ENCODE measurements at regions of chr18 and their contacts with region 1.

Region 1: GRCh38 chr18:77132371-77133050 is at the start of gene MBP:
- DNase-seq: peak; percentile 76
- ATAC-seq: peak; percentile 66
- H3K4me3 Mint-ChIP-seq: peak within 1 kb of the TSS; percentile 97
- H3K27ac Mint-ChIP-seq: peak within 1 kb of the TSS; percentile 94
- H3K4me1 Mint-ChIP-seq: peaks cover 62% of the 10 kb centered on the region
- H3K27me3 Mint-ChIP-seq: no peaks in the 10 kb centered on the region
- total RNA-seq, gene MBP: 86.5 to 87.0 TPM

Region 2: DNA sequence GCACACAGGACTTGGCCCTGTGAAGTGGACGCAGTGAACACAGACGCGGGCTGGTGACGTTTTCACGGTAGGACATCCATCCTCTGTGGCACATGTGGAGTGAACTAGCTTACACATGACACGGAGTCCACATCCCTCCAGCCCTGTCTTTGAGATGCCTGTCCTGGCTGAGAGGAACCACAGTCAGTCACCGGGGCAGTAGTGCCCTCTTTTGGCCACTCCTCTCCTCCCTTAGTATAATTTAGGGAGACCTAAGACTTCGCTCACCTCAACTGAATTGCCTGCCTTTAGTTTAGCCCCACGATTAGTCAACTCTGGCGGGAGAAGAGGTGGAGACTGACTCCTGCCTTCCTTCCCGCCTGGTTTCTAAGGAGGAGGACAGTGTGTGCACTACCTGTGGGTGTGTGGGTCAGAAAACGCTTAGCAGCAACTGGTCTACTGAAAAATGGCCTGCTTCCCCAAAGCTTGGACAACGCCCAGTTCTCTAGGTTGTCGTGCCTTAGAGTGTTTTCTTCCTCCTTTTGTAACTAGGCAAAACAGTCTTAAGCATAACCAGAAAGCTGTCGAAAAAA is 70.5 kb before region 1 on chr18:
- CTCF ChIA-PET with region 1: interaction called, 26 read pairs
- POLR2A ChIA-PET with region 1: interaction called, 101 read pairs
- DNase-seq: peak; percentile 58
- ATAC-seq: peak; percentile 45
- H3K4me3 Mint-ChIP-seq: peak overlapping the region; percentile 72
- H3K27ac Mint-ChIP-seq: peak overlapping the region; percentile 99
- H3K4me1 Mint-ChIP-seq: peaks cover 88% of the 10 kb centered on the region
- H3K27me3 Mint-ChIP-seq: no peaks in the 10 kb centered on the region

Region 3: GRCh38 chr18:77101410-77102258 is 30.9 kb before region 1 on chr18:
- CTCF ChIA-PET with region 1: interaction called, 8 read pairs
- POLR2A ChIA-PET with region 1: interaction called, 58 read pairs
- DNase-seq: peak; percentile 48
- ATAC-seq: peak; percentile 56
- H3K4me3 Mint-ChIP-seq: peak overlapping the region; percentile 71
- H3K27ac Mint-ChIP-seq: peak overlapping the region; percentile 96
- H3K4me1 Mint-ChIP-seq: peaks cover 93% of the 10 kb centered on the region
- H3K27me3 Mint-ChIP-seq: no peaks in the 10 kb centered on the region

Region 4: DNA sequence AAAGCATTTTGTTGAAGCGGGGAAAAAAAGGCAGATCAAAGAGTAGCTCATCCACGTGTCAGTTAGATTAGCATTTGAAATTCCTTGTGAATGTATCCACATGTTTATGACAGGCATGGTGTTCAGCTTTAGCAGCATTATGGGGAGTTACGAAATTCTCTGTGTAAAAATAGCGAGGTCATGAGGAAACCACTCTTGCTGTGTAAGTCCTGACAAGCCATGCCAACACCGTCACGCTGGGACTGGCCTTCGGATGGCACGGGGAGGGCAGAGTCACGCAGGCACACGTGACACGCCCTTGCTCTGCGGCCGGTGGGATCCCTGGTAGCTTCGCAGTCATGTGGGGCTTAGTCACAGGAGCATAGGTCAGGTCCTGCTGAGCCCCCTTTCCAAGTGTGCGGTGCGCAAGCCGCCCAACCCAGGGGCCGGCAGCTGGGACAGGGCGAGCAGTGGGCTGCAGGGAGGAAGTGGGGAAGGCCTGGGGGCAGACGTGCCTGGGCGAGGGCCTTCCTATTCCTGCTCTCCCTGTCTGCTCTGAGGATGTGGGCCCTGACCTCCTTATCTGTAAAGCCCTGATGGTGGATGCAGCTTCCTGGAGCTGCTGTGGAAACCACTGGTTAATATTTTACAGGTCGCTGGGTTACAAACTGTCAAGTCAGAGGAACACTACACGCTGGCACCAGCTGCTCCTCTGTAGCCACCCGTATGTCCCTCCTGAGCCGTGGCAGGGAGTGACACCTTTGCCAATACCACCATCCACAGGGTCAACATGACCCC is 17.9 kb before region 1 on chr18:
- CTCF ChIA-PET with region 1: no interaction called
- POLR2A ChIA-PET with region 1: interaction called, 15 read pairs
- DNase-seq: peak; percentile 43
- ATAC-seq: peak; percentile 58
- H3K4me3 Mint-ChIP-seq: peak overlapping the region; percentile 31
- H3K27ac Mint-ChIP-seq: peak overlapping the region; percentile 82
- H3K4me1 Mint-ChIP-seq: peaks cover 89% of the 10 kb centered on the region
- H3K27me3 Mint-ChIP-seq: no peaks in the 10 kb centered on the region

Region 5: DNA sequence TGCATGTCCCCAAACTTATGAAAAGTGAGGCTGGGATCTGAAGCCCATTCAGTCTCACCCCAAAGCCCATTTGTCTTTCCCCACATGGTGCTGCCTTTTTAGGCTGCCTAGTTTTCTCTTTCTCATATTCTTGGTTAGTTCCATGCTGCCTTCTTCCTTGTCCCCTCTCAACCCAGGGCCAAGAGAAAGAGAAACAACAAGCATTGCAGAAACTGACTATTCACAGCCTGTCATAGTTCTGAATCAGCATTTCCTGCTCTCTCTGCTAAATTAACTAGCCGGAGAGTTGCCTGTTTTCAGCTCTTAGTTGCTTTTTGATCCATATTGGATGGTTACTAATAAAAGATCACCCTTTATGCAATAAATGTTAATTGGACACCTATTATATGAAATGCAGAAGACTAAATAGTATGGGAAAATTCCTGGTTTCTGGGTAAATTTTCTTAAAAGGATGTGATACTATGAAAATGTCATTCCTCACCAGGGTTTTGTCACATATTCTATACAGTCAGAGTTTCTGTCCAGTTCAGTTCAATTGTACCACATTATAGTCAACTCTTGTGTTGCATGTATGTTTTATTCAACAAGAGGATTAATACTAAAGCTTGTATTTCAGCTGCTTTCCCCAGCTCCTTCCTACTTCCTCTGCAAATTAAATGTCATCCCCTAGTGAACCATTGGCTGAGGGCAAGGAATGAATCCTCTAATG is 363.6 kb after region 1 on chr18:
- CTCF ChIA-PET with region 1: no interaction called
- POLR2A ChIA-PET with region 1: no interaction called
- DNase-seq: no peak
- ATAC-seq: no peak
- H3K4me3 Mint-ChIP-seq: no peak overlapping the region
- H3K27ac Mint-ChIP-seq: no peak overlapping the region
- H3K4me1 Mint-ChIP-seq: no peaks in the 10 kb centered on the region
- H3K27me3 Mint-ChIP-seq: no peaks in the 10 kb centered on the region